Activated CD4-positive, alpha-beta T cell treated with anti-CD3 and anti-CD28 coated beads for 36 hours (primary cell): ENCODE measurements at regions of chrX and their contacts with region 1.

Region 1: GRCh38 chrX:151753313-151754041 is 18.9 kb downstream of the CNGA2 start:
- DNase-seq: peak; percentile 44
- ATAC-seq: peak; percentile 51
- H3K4me3 Mint-ChIP-seq: no peak overlapping the region
- H3K27ac Mint-ChIP-seq: no peak overlapping the region
- H3K4me1 Mint-ChIP-seq: no peaks in the 10 kb centered on the region
- H3K27me3 Mint-ChIP-seq: peaks cover 3% of the 10 kb centered on the region

Region 2: GRCh38 chrX:151801993-151802392 is 48.5 kb after region 1 on chrX:
- CTCF ChIA-PET with region 1: no interaction called
- POLR2A ChIA-PET with region 1: no interaction called
- intact Hi-C with region 1: no loop called
- DNase-seq: no peak
- ATAC-seq: no peak
- H3K4me3 Mint-ChIP-seq: no peak overlapping the region
- H3K27ac Mint-ChIP-seq: no peak overlapping the region
- H3K4me1 Mint-ChIP-seq: no peaks in the 10 kb centered on the region
- H3K27me3 Mint-ChIP-seq: peaks cover 2% of the 10 kb centered on the region

Region 3: GRCh38 chrX:152632445-152633097 is 879.1 kb after region 1 on chrX:
- CTCF ChIA-PET with region 1: interaction called, 7 read pairs
- POLR2A ChIA-PET with region 1: no interaction called
- intact Hi-C with region 1: loop called (anchors 2 kb)
- DNase-seq: peak; percentile 58
- ATAC-seq: no peak
- H3K4me3 Mint-ChIP-seq: no peak overlapping the region
- H3K27ac Mint-ChIP-seq: no peak overlapping the region
- H3K4me1 Mint-ChIP-seq: no peaks in the 10 kb centered on the region
- H3K27me3 Mint-ChIP-seq: peaks cover 14% of the 10 kb centered on the region

Region 4: GRCh38 chrX:152817078-152817764 is 1063.7 kb after region 1 on chrX:
- CTCF ChIA-PET with region 1: no interaction called
- POLR2A ChIA-PET with region 1: no interaction called
- intact Hi-C with region 1: loop called in 1 of 2 experiments (anchors 5 kb)
- DNase-seq: peak; percentile 42
- ATAC-seq: no peak
- H3K4me3 Mint-ChIP-seq: no peak overlapping the region
- H3K27ac Mint-ChIP-seq: no peak overlapping the region
- H3K4me1 Mint-ChIP-seq: no peaks in the 10 kb centered on the region
- H3K27me3 Mint-ChIP-seq: peaks cover 8% of the 10 kb centered on the region